ENCODE measurements at regions of chr5 and their contacts with region 1.

Region 1: DNA sequence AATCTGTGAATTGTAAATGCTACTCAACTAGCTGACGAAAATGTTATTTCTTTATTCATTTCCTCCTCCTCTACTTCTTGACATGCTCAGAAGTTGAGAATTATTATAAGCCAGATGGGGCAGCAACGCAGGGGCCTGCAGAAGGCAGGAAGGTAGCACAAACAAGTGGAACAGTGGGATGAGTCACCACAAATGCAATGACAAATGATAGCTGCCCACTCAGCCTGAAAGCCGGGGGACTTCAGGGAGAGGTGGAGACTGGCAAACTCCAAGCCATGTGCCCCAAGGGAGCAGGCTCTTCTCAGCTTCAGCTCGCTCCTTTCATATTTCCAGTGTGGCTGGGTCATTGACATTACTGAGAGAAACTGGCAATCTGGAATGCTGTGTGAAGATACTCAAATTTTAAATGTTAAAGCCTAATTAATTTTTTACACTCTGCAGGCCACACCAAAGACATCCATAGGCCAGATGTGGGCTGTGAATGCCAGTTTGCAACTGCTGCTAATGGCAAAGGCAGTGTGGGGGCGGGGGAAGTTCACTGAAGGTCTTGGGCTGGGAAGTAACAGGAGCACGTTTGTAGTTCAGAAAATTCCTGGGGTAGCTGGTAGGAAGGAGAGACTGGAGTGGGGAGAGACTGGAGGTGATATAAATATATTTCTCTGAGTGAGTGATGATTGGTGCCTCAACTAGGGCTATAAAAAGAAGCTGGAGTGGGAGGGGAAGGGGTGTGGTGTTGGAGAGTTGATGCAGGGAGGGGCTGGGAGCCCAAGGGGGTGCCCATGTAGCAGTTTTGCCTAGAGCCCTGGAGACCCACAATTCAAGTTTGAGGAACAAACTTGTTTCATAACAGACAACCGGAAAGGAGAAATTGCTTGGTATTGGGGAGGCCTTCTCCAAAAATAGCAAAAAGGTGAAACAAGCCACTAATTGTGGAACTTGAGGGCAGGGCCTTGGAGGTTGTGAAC is 20.8 kb upstream of the ADRB2 start:
- DNase-seq: no peak
- ATAC-seq: peak; percentile 28
- H3K4me3 Mint-ChIP-seq: peak overlapping the region; percentile 47
- H3K27ac Mint-ChIP-seq: peak overlapping the region; percentile 88
- H3K4me1 Mint-ChIP-seq: peaks cover 66% of the 10 kb centered on the region
- H3K27me3 Mint-ChIP-seq: no peaks in the 10 kb centered on the region
- CTCF ChIP-seq: no peak

Region 2: GRCh38 chr5:147805030-147805454 is 1000.6 kb before region 1 on chr5:
- CTCF ChIA-PET with region 1: no interaction called
- POLR2A ChIA-PET with region 1: no interaction called
- intact Hi-C with region 1: loop called (anchors 10 kb)
- DNase-seq: no peak
- ATAC-seq: peak; percentile 96
- H3K4me3 Mint-ChIP-seq: peak overlapping the region; percentile 25
- H3K27ac Mint-ChIP-seq: peak overlapping the region; percentile 62
- H3K4me1 Mint-ChIP-seq: peaks cover 23% of the 10 kb centered on the region
- H3K27me3 Mint-ChIP-seq: peaks cover 18% of the 10 kb centered on the region
- CTCF ChIP-seq: no peak

Region 3: DNA sequence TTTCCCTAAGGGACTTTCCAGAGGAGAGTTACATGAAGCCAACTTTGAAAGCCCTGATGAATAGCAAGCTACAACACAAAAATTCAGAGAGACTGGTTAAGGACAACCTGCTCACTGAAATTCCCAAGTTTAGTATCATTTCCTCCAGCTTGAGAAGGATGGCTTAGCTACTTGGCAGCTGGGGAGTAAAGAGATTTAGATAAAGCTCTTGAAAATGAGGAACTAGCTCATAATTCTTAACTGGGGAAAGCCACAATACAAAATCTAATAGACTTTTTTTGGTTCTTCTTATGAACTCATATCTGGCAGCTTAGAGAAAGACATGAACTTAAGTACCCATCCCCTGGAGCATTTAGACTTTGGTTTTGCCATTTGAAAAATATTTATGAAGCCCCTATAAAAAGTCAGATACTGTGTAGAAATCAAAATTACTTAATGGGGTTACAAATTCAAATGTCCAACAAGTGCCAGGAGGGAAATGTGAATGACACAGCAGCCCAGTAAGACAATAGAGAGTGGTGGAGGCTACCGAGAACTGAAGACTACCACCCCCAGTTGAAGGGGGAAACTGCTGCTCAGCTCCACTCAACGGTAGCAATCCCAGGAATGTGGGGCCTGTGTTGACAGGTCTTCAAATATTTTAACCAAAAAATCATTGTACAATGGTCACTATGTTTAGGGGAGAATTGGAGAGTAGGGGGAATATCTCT is 58.6 kb before region 1 on chr5:
- CTCF ChIA-PET with region 1: interaction called, 7 read pairs
- POLR2A ChIA-PET with region 1: no interaction called
- intact Hi-C with region 1: loop called (anchors 1 kb)
- DNase-seq: no peak
- ATAC-seq: peak; percentile 49
- H3K4me3 Mint-ChIP-seq: no peak overlapping the region
- H3K27ac Mint-ChIP-seq: peak overlapping the region; percentile 36
- H3K4me1 Mint-ChIP-seq: peaks cover 15% of the 10 kb centered on the region
- H3K27me3 Mint-ChIP-seq: no peaks in the 10 kb centered on the region
- CTCF ChIP-seq: no peak

Region 4: GRCh38 chr5:148791334-148791667 is 14.3 kb before region 1 on chr5:
- CTCF ChIA-PET with region 1: interaction called, 4 read pairs
- POLR2A ChIA-PET with region 1: interaction called, 4 read pairs
- intact Hi-C with region 1: loop called (anchors 1 kb)
- DNase-seq: no peak
- ATAC-seq: peak; percentile 55
- H3K4me3 Mint-ChIP-seq: no peak overlapping the region
- H3K27ac Mint-ChIP-seq: no peak overlapping the region
- H3K4me1 Mint-ChIP-seq: peaks cover 42% of the 10 kb centered on the region
- H3K27me3 Mint-ChIP-seq: no peaks in the 10 kb centered on the region
- CTCF ChIP-seq: no peak

Region 5: DNA sequence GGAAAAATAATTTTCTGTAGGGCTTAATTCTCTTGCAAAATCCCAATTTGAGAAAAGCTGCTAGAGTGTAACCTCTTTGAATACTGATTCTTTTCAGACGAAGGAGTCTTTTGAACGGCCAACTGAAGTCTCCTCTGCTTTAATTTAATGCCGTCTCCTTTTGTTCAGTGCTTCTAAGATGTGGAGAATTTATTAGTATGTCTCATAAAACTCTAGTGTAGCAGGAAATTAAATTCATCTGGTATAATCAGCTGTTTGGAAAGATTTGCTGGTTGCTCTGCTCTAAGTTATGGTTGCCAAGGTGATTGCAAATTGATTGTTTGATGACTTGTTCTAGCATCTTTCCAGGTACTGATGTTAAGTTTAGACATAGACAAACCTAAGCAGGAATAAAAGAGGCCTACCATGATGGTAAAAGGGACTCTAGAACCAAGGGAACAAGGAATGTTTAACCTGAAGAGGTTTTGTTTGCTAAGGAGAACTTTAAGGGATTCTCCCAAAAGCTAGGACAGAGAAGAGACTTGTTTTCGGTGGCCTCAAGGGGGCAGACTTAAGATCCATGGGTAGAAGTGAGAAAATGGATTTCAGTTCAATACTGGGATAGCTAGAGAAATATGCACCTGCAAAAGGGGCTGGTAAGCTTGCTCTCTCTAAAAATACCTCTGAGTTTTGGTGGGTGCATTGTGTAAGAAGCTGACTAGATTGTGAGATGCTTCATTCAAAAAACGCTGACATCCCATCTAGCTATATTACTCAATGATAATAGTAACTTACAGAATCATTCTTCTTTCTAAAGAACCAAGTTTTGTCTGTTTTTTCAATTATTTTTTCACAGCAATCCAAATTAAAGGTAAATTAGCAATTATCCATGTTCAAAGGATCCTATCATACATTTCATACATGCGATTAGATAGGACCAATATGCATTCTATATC is 15.1 kb after region 1 on chr5:
- CTCF ChIA-PET with region 1: interaction called, 6 read pairs
- POLR2A ChIA-PET with region 1: interaction called, 19 read pairs
- intact Hi-C with region 1: loop called (anchors 1 kb)
- DNase-seq: no peak
- ATAC-seq: peak; percentile 48
- H3K4me3 Mint-ChIP-seq: no peak overlapping the region
- H3K27ac Mint-ChIP-seq: no peak overlapping the region
- H3K4me1 Mint-ChIP-seq: peaks cover 56% of the 10 kb centered on the region
- H3K27me3 Mint-ChIP-seq: no peaks in the 10 kb centered on the region
- CTCF ChIP-seq: no peak

Region 6: DNA sequence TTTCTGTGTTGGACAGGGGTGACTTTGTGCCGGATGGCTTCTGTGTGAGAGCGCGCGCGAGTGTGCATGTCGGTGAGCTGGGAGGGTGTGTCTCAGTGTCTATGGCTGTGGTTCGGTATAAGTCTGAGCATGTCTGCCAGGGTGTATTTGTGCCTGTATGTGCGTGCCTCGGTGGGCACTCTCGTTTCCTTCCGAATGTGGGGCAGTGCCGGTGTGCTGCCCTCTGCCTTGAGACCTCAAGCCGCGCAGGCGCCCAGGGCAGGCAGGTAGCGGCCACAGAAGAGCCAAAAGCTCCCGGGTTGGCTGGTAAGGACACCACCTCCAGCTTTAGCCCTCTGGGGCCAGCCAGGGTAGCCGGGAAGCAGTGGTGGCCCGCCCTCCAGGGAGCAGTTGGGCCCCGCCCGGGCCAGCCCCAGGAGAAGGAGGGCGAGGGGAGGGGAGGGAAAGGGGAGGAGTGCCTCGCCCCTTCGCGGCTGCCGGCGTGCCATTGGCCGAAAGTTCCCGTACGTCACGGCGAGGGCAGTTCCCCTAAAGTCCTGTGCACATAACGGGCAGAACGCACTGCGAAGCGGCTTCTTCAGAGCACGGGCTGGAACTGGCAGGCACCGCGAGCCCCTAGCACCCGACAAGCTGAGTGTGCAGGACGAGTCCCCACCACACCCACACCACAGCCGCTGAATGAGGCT is 20.6 kb after region 1 on chr5 and contains the start of gene ADRB2:
- CTCF ChIA-PET with region 1: interaction called, 7 read pairs
- POLR2A ChIA-PET with region 1: interaction called, 19 read pairs
- intact Hi-C with region 1: loop called (anchors 1 kb)
- DNase-seq: peak; percentile 84
- ATAC-seq: peak; percentile 89
- H3K4me3 Mint-ChIP-seq: peak within 1 kb of the TSS; percentile 89
- H3K27ac Mint-ChIP-seq: peak within 1 kb of the TSS; percentile 98
- H3K4me1 Mint-ChIP-seq: peaks cover 75% of the 10 kb centered on the region
- H3K27me3 Mint-ChIP-seq: no peaks in the 10 kb centered on the region
- CTCF ChIP-seq: no peak
- total RNA-seq, gene ADRB2: 3.2 TPM in 2 replicates

Region 7: GRCh38 chr5:148831590-148832565 is 26.3 kb after region 1 on chr5:
- CTCF ChIA-PET with region 1: interaction called, 7 read pairs
- POLR2A ChIA-PET with region 1: interaction called, 19 read pairs
- intact Hi-C with region 1: loop called (anchors 1 kb)
- DNase-seq: no peak
- ATAC-seq: peak; percentile 70
- H3K4me3 Mint-ChIP-seq: peak overlapping the region; percentile 76
- H3K27ac Mint-ChIP-seq: peak overlapping the region; percentile 98
- H3K4me1 Mint-ChIP-seq: peaks cover 97% of the 10 kb centered on the region
- H3K27me3 Mint-ChIP-seq: no peaks in the 10 kb centered on the region
- CTCF ChIP-seq: no peak